ENCODE measurements at regions of chr4 and their contacts with region 1.

Region 1: DNA sequence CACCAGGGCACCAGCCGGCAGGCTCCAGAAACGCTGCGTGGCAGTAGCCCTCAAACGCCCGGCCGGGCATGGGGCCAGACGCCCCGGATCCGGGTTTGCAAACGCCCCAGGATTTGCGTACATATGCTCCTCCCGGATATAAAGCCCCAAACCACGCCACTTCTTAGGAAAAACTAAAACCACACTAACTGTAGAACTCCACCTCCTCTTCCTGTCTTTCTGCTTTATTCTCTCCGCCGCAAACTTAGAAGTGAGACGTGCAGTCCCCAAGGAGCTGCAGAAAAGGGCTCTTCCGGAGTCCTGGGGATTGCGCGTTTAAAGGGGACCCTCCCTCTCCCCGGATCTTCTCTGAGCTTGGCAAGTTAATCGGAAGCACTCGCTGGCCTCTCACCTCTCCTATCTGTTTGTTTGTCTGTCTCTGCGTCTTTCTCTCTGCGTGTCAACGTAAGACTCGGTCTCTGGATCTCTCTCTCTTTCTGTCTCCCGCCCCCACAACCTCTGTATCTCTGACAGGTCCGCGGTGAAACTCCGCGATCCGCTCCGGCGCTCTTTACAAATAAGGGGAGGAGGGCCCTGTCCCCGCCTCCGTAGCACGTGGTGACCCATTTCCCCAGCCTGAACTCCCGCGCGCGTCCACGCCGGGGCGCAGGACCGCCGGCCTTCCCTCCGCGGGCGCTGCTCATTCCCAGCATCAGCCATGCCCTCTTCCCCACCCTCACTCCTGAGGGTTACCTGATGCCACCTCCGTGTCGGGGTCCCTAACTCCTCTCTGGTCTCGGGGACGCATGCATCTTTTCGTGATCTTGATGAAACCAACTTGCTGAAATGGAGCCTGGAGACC is at the start of gene SLC39A8:
- DNase-seq: peak; percentile 47 to 48
- ATAC-seq: peak; percentile 82 to 84
- H3K4me3 ChIP-seq: peak within 1 kb of the TSS; percentile 62 to 84 (median 64)
- H3K27ac ChIP-seq: peak within 1 kb of the TSS; percentile 34 to 59 (median 54)
- H3K4me1 ChIP-seq: peaks cover 0 to 4% of the 10 kb centered on the region in 2 donors
- H3K27me3 ChIP-seq: peaks cover 0 to 5% (median 0%) of the 10 kb centered on the region in 3 donors
- CTCF ChIP-seq: peak; percentile 35 to 71 (median 61)
- POLR2A ChIP-seq: peak in 1 of 2 donors; percentile 48
- total RNA-seq, gene SLC39A8: 1.2 to 1.8 (median 1.7) TPM

Region 2: GRCh38 chr4:101921329-101921728 is 423.8 kb before region 1 on chr4:
- in situ Hi-C with region 1: no loop called
- intact Hi-C with region 1: no loop called
- DNase-seq: no peak
- ATAC-seq: no peak
- H3K4me3 ChIP-seq: no peak overlapping the region
- H3K27ac ChIP-seq: no peak overlapping the region
- H3K4me1 ChIP-seq: no peaks in the 10 kb centered on the region
- H3K27me3 ChIP-seq: no peaks in the 10 kb centered on the region
- CTCF ChIP-seq: no peak
- POLR2A ChIP-seq: no peak

Region 3: GRCh38 chr4:102430461-102430910 is 85.3 kb after region 1 on chr4:
- in situ Hi-C with region 1: no loop called
- intact Hi-C with region 1: loop called (anchors 5 kb)
- DNase-seq: no peak
- ATAC-seq: no peak
- H3K4me3 ChIP-seq: peak overlapping the region; percentile 55 to 84 (median 64)
- H3K27ac ChIP-seq: peak overlapping the region; percentile 45 to 70 (median 66)
- H3K4me1 ChIP-seq: peaks cover 0 to 6% of the 10 kb centered on the region in 2 donors
- H3K27me3 ChIP-seq: no peaks in the 10 kb centered on the region
- CTCF ChIP-seq: no peak
- POLR2A ChIP-seq: no peak

Measured in gastrocnemius medialis (tissue), 4 donors.